Endothelial cell of umbilical vein (primary cell): ENCODE measurements at regions of chr4 and their contacts with region 1.

Region 1: GRCh38 chr4:158172261-158173258 is at the start of gene GASK1B:
- DNase-seq: peak; percentile 91
- H3K4me3 ChIP-seq: peak within 1 kb of the TSS; percentile 24 to 94 (median 53)
- H3K27ac ChIP-seq: peak within 1 kb of the TSS; percentile 59
- H3K4me1 ChIP-seq: peaks cover 28% of the 10 kb centered on the region
- H3K27me3 ChIP-seq: no peaks in the 10 kb centered on the region
- CTCF ChIP-seq: peak; percentile 50 to 57
- POLR2A ChIP-seq: no peak
- total RNA-seq, gene GASK1B: 235 and 238 TPM in 2 replicates

Region 2: GRCh38 chr4:157220371-157220881 is 952.1 kb before region 1 on chr4 and contains the start of gene GRIA2:
- CTCF ChIA-PET with region 1: interaction called, 6 read pairs
- POLR2A ChIA-PET with region 1: no interaction called
- dilution Hi-C with region 1: no loop called
- intact Hi-C with region 1: loop called (anchors 1 kb)
- DNase-seq: peak; percentile 69
- H3K4me3 ChIP-seq: peak within 1 kb of the TSS in 2 of 3 experiments; percentile 11 to 22
- H3K27ac ChIP-seq: no peak within 1 kb of the TSS
- H3K4me1 ChIP-seq: peaks cover 7% of the 10 kb centered on the region
- H3K27me3 ChIP-seq: peaks cover 28 to 45% of the 10 kb centered on the region in 2 experiments
- CTCF ChIP-seq: no peak
- POLR2A ChIP-seq: no peak
- total RNA-seq, gene GRIA2: not detected in 2 replicates

Region 3: DNA sequence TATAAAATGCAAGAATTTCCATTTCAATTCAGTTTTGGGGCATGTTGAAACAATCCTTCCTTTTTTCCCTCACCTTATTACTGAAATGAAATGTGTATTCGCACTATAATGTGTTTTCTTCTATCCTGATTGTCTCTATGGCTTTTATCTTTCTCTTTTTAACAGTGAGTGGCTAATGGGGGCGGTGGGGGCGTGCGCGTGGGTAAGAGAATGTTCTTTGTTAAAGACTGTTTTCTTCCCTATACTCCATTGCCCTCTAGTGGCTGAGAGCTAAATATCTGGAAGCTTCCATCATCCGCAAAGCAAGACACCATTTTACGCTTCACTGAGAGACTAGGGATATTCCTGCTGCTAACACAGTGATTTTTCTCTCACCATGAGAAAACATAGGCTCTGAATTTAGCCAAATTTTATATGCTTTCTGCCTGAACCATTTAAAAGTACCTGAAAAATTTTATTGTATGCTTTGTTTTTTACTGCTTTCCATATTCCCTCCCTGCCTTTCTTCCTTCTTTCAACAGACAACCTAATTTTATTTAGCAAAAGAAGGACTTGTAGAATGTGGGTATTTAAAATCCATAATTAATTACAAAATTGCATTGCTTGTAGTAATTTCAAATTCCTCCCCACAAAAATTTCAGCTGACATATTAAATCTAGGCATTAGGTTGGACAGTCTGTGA is 193.7 kb before region 1 on chr4:
- CTCF ChIA-PET with region 1: interaction called, 12 read pairs
- POLR2A ChIA-PET with region 1: no interaction called
- dilution Hi-C with region 1: no loop called
- intact Hi-C with region 1: no loop called
- DNase-seq: peak; percentile 82
- H3K4me3 ChIP-seq: peak overlapping the region in 2 of 3 experiments; percentile 18 to 75
- H3K27ac ChIP-seq: peak overlapping the region; percentile 44
- H3K4me1 ChIP-seq: peaks cover 29% of the 10 kb centered on the region
- H3K27me3 ChIP-seq: no peaks in the 10 kb centered on the region
- CTCF ChIP-seq: peak; percentile 61 to 67
- POLR2A ChIP-seq: no peak

Region 4: DNA sequence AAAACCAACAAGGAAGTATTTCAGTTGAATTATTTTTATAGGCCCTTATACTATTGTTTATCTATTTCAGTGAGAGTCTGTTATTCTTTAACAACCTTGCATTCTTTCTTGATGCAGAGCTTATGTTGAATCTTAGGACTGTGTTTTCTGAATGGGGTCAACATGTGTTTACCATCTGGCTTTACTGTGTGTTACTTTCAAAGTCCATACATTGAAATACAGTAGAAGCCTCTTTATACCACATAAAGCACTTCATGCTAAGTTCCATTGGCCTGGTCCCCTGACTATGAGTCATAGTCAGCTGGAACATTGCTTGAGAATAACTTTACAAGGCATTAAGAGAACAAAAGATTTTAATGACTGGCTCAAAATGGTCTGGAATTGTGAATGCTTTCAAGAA is 152.4 kb before region 1 on chr4:
- CTCF ChIA-PET with region 1: interaction called, 12 read pairs
- POLR2A ChIA-PET with region 1: no interaction called
- dilution Hi-C with region 1: loop called (anchors 25 kb)
- intact Hi-C with region 1: no loop called
- DNase-seq: peak; percentile 96
- H3K4me3 ChIP-seq: peak overlapping the region in 1 of 3 experiments; percentile 30
- H3K27ac ChIP-seq: peak overlapping the region; percentile 95
- H3K4me1 ChIP-seq: peaks cover 59% of the 10 kb centered on the region
- H3K27me3 ChIP-seq: no peaks in the 10 kb centered on the region
- CTCF ChIP-seq: no peak
- POLR2A ChIP-seq: no peak

Region 5: GRCh38 chr4:158161551-158162354 is 10.8 kb before region 1 on chr4:
- CTCF ChIA-PET with region 1: interaction called, 28 read pairs
- POLR2A ChIA-PET with region 1: interaction called, 3 read pairs
- dilution Hi-C with region 1: no loop called
- intact Hi-C with region 1: loop called (anchors 1 kb)
- DNase-seq: peak; percentile 99
- H3K4me3 ChIP-seq: peak overlapping the region in 1 of 3 experiments; percentile 16
- H3K27ac ChIP-seq: peak overlapping the region; percentile 77
- H3K4me1 ChIP-seq: peaks cover 94% of the 10 kb centered on the region
- H3K27me3 ChIP-seq: no peaks in the 10 kb centered on the region
- CTCF ChIP-seq: no peak
- POLR2A ChIP-seq: peak; percentile 49